ENCODE measurements at regions of chr2 and their contacts with region 1.

Region 1: DNA sequence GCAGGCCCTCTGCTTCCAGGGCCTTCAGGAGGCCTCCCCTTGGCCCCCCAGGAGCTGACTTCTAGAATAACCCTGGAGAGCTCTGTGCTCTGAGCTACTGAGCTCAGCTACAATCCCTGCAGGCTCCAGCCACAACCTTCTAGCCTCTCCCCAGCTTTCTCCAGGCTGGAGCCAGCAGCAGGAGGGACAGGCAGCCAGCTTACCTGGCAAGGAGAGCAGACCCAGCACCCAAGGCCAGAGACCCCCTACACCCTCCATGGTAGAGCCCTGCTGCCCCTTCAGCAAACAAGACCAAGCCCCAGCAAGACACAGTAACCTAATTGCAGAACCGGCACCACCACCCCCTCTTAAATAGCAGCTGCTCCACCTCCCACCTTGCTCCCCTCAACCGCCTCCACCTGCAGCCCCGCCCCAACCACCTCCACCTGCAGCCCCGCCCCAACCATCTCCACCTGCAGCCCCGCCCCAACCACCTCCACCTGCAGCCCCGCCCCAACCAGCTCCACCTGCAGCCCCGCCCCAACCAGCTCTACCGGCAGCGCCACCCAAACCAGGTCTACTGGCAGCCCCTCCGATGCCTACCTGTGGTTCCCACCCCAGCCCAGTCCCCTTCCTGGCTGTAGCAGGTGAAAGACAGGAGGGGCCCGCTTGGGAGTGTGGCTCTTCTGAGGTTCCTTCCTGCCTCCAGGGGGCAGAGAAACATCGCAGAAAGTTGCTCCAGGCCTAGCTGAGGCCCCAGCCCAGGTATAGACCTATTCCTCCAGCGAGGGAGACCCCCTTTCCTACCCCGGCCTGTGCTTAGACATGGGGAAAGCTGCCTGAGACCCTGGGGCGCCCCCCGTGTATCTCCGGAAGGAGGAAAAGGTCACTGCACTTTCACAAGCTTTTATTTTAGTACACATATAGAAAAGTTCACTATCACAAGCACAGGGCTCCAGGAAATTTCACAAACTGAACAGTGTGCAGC is at the start of gene ASTL:
- DNase-seq: peak in 2 of 3 donors; percentile 61 to 63
- ATAC-seq: peak; percentile 44 to 63
- H3K4me3 ChIP-seq: no peak within 1 kb of the TSS
- H3K27ac ChIP-seq: no peak within 1 kb of the TSS
- H3K4me1 ChIP-seq: no peaks in the 10 kb centered on the region
- H3K27me3 ChIP-seq: no peaks in the 10 kb centered on the region
- total RNA-seq, gene ASTL: not detected

Region 2: GRCh38 chr2:96174251-96175144 is 36.0 kb after region 1 on chr2:
- intact Hi-C with region 1: loop called in 1 of 4 experiments (anchors 5 kb)
- DNase-seq: peak; percentile 65 to 88 (median 87)
- ATAC-seq: peak; percentile 83 to 86
- H3K4me3 ChIP-seq: no peak overlapping the region
- H3K27ac ChIP-seq: no peak overlapping the region
- H3K4me1 ChIP-seq: no peaks in the 10 kb centered on the region
- H3K27me3 ChIP-seq: no peaks in the 10 kb centered on the region